Naive thymus-derived CD4-positive, alpha-beta T cell (primary cell): ENCODE measurements at regions of chr4 and their contacts with region 1.

Region 1: DNA sequence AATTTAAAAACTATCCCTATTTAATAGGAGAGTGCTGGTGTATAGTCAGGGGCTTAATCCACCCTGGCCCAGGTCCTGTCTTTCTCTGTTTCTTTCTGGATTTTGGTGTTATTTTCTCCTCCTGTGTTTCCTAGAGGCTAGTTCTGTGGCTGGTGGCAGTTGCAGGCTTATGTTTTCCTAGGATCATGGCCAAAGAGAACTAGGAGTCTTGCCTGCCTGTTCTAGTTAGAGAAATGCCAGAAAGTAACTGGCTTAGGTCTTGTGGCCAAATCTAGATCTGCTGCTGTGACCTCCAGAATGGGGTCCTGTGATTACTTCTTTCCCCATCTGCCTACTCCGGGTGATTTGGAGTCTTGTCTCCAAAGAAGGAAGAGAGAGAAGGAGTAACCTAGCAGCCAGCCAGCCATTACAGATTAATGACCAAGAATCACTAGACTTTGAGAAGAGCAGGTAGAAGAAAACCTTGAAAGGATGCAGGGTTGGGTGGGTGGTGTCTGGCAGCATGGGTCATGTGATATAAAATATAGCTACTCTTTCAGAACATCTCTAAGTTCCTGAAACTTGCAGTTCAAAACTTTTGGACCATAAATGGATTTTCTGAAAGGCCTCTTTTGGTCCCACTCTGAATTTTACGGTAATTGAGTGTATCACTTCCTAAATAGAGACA is 117.9 kb downstream of the STIM2 start:
- DNase-seq: no peak
- ATAC-seq: no peak
- H3K4me3 ChIP-seq: no peak overlapping the region
- H3K4me3 Mint-ChIP-seq: peak overlapping the region in 2 of 10 donors; percentile 34 to 61
- H3K27ac ChIP-seq: no peak overlapping the region
- H3K27ac Mint-ChIP-seq: peak overlapping the region in 8 of 9 donors; percentile 19 to 80 (median 56)
- H3K4me1 ChIP-seq: peaks cover 0 to 8% of the 10 kb centered on the region in 2 donors
- H3K4me1 Mint-ChIP-seq: peaks cover 33 to 76% (median 59%) of the 10 kb centered on the region in 7 donors
- H3K27me3 ChIP-seq: no peaks in the 10 kb centered on the region
- H3K27me3 Mint-ChIP-seq: no peaks in the 10 kb centered on the region

Region 2: GRCh38 chr4:26992657-26993361 is 14.3 kb after region 1 on chr4:
- CTCF ChIA-PET with region 1: no interaction called
- POLR2A ChIA-PET with region 1: interaction called, 4 read pairs
- intact Hi-C with region 1: loop called in 1 of 2 experiments (anchors 2 kb)
- DNase-seq: no peak
- ATAC-seq: peak; percentile 54
- H3K4me3 ChIP-seq: no peak overlapping the region
- H3K4me3 Mint-ChIP-seq: no peak overlapping the region
- H3K27ac ChIP-seq: no peak overlapping the region
- H3K27ac Mint-ChIP-seq: no peak overlapping the region
- H3K4me1 ChIP-seq: peaks cover 11 to 32% of the 10 kb centered on the region in 2 donors
- H3K4me1 Mint-ChIP-seq: peaks cover 12 to 39% (median 27%) of the 10 kb centered on the region in 7 donors
- H3K27me3 ChIP-seq: no peaks in the 10 kb centered on the region
- H3K27me3 Mint-ChIP-seq: no peaks in the 10 kb centered on the region

Region 3: GRCh38 chr4:27066601-27067000 is 88.1 kb after region 1 on chr4:
- CTCF ChIA-PET with region 1: no interaction called
- POLR2A ChIA-PET with region 1: no interaction called
- intact Hi-C with region 1: no loop called
- DNase-seq: no peak
- ATAC-seq: peak; percentile 72
- H3K4me3 ChIP-seq: no peak overlapping the region
- H3K4me3 Mint-ChIP-seq: no peak overlapping the region
- H3K27ac ChIP-seq: no peak overlapping the region
- H3K27ac Mint-ChIP-seq: no peak overlapping the region
- H3K4me1 ChIP-seq: no peaks in the 10 kb centered on the region
- H3K4me1 Mint-ChIP-seq: no peaks in the 10 kb centered on the region
- H3K27me3 ChIP-seq: no peaks in the 10 kb centered on the region
- H3K27me3 Mint-ChIP-seq: peaks cover 0 to 22% (median 2%) of the 10 kb centered on the region in 5 donors

Region 4: GRCh38 chr4:27635936-27636913 is 657.7 kb after region 1 on chr4:
- CTCF ChIA-PET with region 1: no interaction called
- POLR2A ChIA-PET with region 1: no interaction called
- intact Hi-C with region 1: no loop called
- DNase-seq: no peak
- ATAC-seq: no peak
- H3K4me3 ChIP-seq: no peak overlapping the region
- H3K4me3 Mint-ChIP-seq: no peak overlapping the region
- H3K27ac ChIP-seq: no peak overlapping the region
- H3K27ac Mint-ChIP-seq: no peak overlapping the region
- H3K4me1 ChIP-seq: no peaks in the 10 kb centered on the region
- H3K4me1 Mint-ChIP-seq: no peaks in the 10 kb centered on the region
- H3K27me3 ChIP-seq: no peaks in the 10 kb centered on the region
- H3K27me3 Mint-ChIP-seq: no peaks in the 10 kb centered on the region